ENCODE measurements at regions of chr1 and their contacts with region 1.

Region 1: DNA sequence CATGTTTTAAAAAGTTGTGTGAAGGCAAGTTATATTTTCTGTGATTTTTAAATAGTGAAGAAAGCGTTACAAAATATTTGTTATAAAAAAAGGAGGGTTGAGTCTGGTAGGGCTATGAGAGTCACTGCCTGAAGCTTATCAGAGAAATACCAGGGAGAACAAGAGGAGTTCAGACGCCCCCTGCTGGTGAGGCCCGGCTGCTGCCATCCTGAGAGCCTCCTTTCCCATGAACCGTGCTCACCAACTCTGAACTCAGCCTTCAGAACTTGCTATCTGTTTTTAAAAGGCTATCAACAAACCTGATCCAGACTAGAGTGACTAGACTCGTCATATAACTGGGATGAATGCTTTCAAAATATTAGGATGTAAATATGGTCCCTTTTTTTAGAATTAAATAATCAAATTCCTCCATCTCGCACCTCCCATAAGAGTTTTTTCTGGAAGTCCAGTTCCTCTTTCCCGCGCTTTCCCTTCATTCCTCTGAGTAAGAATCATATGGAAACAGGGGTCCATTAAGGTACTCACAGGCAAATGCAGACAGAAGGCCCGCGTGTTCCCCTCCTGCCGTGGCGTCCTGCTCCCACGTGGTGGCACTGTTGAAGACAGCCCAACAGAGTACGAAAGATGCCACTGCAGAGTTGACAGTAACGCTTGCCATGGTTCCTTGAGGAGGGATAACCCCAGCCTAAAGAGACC is 26.2 kb upstream of the SPATA6 start:
- DNase-seq: peak; percentile 90
- ATAC-seq: peak; percentile 91

Region 2: GRCh38 chr1:48356901-48357300 is 141.3 kb before region 1 on chr1:
- intact Hi-C with region 1: loop called (anchors 5 kb)
- DNase-seq: no peak
- ATAC-seq: no peak

Measured in Right ventricle myocardium inferior (tissue), 1 donor.